ENCODE measurements at regions of chr15 and their contacts with region 1.

Region 1: DNA sequence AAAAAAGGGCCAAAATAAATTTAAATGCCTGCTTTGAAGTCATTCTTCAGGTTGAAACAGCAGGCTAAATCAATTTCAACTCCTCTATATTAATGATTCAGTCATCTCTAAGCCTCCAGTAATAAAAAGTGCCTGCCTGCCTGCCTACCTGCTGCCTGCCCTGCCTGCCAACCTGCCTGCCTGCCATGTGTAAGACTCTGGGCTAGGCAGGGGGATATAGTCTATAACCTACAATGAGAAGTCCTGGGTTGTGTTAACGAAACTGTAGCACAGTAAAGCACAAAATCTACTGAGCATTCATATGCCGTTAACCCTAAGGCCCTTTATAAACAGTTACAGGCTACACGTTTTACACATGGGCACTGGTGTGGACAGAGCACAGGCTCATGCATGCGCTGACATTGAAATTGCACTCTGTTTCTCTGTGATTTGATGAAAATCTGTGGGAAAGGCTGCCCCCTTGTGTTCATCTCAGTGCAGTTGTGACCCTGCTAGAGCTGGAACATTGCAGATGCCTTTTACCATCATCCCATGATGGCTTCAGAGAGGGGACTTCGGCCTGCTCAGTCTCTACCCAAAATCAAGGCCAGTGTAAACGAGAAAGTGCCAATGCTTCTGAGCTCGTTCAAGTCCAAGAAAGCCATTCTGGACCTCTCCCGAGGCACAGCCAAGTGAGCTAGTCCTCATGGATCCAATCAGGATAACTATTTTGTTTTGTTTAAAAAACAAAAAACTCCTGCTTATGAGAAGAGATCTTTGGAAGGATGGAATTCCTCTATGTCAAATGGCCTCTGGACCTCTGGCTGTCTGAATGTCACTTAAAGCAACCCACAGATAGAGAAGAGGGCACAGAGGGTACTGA is 64.6 kb downstream of the EFL1 start:
- DNase-seq: peak; percentile 71
- H3K4me3 Mint-ChIP-seq: no peak overlapping the region
- H3K27ac Mint-ChIP-seq: no peak overlapping the region
- H3K4me1 Mint-ChIP-seq: no peaks in the 10 kb centered on the region
- H3K27me3 Mint-ChIP-seq: no peaks in the 10 kb centered on the region

Region 2: DNA sequence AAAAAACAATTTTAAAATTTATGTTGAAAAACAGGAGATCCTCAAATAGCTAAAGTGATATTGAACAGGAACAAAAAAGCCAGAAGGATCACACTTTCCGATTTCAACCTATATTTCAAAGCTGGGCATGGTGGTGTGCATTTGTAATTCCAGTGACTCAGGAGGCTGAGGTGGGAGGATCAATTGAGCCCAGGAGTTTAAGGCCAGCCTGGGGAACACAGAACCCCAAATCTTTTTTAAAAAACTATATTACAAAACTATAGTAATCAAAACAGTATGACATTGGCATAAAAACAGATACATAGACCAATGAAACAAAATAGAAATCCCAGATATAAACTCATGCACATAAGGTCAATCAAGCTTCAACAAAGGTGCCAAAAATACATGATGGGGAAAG is 220.5 kb before region 1 on chr15:
- CTCF ChIA-PET with region 1: no interaction called
- intact Hi-C with region 1: no loop called
- DNase-seq: no peak
- H3K4me3 Mint-ChIP-seq: no peak overlapping the region
- H3K27ac Mint-ChIP-seq: no peak overlapping the region
- H3K4me1 Mint-ChIP-seq: no peaks in the 10 kb centered on the region
- H3K27me3 Mint-ChIP-seq: peaks cover 5% of the 10 kb centered on the region

Region 3: DNA sequence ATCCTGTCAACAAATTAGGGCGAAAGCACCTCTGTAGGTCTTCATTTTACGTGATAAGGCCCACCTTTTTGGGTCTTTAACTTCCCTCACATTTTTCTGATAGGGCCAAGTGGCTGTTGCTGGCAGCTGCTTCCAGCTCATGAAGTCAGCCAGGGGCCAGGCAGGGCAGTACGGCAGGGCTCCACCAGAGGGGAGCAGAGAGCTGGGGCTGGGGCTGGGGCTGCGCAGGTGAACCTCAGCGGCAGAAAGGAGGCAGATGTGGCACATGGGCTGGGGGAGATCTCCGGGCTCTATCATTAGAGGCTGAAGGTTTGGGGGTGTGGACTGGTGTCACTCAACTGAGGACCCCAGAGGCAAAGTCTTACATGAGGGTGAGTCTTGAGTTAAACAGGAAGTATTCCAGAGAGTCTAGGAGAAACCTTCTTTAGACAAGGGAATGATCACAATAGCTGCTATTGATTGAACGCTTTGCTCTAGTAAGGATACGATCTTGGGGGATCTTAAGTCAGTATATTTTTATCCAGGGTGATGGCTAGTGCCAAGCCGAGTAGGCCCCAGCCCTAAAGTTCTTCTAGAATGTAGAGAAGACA is 89.4 kb before region 1 on chr15:
- CTCF ChIA-PET with region 1: interaction called, 3 read pairs
- intact Hi-C with region 1: loop called (anchors 1 kb)
- DNase-seq: peak; percentile 80
- H3K4me3 Mint-ChIP-seq: no peak overlapping the region
- H3K27ac Mint-ChIP-seq: no peak overlapping the region
- H3K4me1 Mint-ChIP-seq: peaks cover 2% of the 10 kb centered on the region
- H3K27me3 Mint-ChIP-seq: no peaks in the 10 kb centered on the region